Right ventricle myocardium inferior (tissue), 1 donor: ENCODE measurements at regions of chr19 and their contacts with region 1.

Region 1: GRCh38 chr19:58305065-58305931 is at the start of gene ERVK3-1:
- DNase-seq: peak; percentile 99
- ATAC-seq: peak; percentile 100
- total RNA-seq, gene ERVK3-1: 21.7 TPM

Region 2: DNA sequence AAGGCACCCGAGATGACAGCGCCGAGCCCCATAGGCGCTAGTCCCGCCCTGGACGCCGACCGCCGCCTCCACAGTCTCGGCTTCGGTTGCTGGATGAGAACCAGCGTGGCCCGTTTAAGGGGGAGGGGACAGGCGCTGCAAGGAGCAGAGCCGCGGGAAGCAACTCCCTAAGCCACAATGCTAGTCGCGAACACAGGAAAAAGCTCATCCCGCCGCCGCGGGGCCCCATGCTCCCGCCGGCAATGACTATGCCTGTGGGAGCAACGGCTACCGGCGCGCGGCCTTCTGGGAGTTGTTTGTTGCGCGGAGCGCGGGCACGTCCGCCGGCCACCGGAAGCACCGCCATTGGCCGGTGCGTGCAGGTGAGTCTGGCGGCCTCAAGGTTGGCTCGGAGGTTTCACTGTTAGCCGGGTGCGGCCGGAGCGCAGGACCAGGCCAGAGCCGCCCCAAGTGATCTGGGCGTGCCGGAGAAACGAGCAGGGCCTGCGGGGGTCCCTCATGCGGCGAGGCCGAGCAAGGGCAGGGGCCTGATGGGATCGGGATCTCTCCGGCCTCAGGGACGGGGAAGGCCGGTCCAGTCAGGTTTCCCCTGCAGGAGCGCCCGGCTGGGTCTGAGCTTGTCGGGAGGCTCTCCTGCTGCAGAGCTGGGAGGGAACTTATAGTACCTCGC is 76.6 kb before region 1 on chr19 and contains the start of gene ZNF544:
- intact Hi-C with region 1: loop called (anchors 10 kb)
- DNase-seq: peak; percentile 87
- ATAC-seq: peak; percentile 96
- total RNA-seq, gene ZNF544: 19.4 TPM

Region 3: DNA sequence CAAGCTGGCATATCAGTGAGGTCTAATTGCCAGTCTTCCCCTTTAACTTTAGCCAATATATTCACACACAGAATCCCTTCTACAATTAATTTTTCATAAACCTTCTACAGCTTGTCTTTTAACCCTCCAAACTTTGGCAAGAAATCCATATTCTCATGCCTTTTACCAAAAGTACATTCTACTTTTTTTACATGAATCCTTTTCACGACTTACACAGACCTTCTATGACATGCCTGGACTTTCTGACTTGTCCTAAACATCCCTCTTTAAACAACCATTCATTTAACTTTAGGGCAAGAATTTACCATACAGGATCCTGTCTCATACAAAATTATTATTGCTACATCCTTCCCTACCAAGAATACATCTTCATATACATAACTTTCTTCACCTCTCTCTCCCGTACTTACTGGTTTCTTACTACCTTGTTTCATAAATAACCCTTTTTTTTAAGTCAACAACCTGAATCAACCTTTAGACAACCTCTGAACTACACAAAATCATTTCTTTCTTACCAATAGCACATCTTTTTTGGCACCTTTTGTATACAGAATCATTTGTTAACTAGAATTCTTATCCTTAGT is 53.1 kb before region 1 on chr19:
- intact Hi-C with region 1: no loop called
- DNase-seq: no peak
- ATAC-seq: no peak